Endothelial cell of umbilical vein (primary cell): ENCODE measurements at regions of chr19 and their contacts with region 1.

Region 1: GRCh38 chr19:1905071-1905862 is at the starts of genes ADAT3 and SCAMP4:
- DNase-seq: peak; percentile 99
- H3K4me3 ChIP-seq: peak within 1 kb of the TSS; percentile 55 to 63 (median 61)
- H3K27ac ChIP-seq: peak within 1 kb of the TSS; percentile 73
- H3K4me1 ChIP-seq: no peaks in the 10 kb centered on the region
- H3K27me3 ChIP-seq: no peaks in the 10 kb centered on the region
- CTCF ChIP-seq: no peak
- POLR2A ChIP-seq: peak; percentile 73
- total RNA-seq, gene ADAT3: 8.0 and 11.7 TPM in 2 replicates
- total RNA-seq, gene SCAMP4: 68.2 and 72.2 TPM in 2 replicates

Region 2: DNA sequence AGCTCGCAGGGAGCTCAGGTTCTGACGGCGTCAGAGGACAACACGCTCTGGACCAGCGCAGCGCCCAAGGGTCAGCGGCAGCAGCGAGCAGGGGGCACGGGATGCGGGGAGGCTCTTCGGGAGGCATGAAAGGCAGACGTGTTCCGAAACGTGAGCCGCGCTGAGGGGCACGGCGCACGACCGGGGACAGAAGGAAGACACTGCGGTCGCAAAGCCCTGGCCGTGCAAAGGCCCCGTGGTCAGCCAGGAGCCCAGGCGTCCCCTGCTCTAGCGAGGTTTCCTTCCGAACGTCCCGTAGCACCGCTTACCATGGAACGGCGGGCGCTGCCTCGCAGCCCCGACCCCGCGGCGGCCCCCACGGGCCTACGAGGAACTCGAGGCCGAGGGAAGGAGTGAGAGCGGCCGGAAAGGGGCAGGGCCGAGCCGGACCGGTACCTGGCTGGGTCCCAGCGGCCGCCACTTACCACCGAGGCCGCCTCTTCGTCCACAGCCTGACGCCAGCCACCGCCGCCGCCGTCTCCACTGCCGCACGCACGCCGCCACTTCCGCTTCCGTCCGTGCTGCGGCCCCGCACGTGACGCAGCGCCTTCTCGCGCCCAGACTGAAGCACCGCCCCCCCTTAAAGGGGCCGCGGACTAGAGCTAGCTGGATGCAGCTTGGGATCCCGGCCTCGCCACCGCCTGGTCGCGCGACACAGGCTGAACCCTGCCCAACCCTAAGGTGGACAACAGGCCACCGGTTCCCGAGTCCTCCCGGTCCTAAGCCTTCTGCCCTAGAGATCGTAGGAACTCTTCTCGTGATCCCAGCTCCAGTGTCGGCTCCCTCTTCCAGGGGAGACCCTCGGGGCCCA is 29.4 kb before region 1 on chr19:
- CTCF ChIA-PET with region 1: no interaction called
- POLR2A ChIA-PET with region 1: no interaction called
- dilution Hi-C with region 1: no loop called
- intact Hi-C with region 1: loop called (anchors 1 kb)
- DNase-seq: peak; percentile 91
- H3K4me3 ChIP-seq: peak overlapping the region; percentile 52 to 83 (median 72)
- H3K27ac ChIP-seq: peak overlapping the region; percentile 92
- H3K4me1 ChIP-seq: peaks cover 21% of the 10 kb centered on the region
- H3K27me3 ChIP-seq: no peaks in the 10 kb centered on the region
- CTCF ChIP-seq: no peak
- POLR2A ChIP-seq: peak; percentile 88

Region 3: DNA sequence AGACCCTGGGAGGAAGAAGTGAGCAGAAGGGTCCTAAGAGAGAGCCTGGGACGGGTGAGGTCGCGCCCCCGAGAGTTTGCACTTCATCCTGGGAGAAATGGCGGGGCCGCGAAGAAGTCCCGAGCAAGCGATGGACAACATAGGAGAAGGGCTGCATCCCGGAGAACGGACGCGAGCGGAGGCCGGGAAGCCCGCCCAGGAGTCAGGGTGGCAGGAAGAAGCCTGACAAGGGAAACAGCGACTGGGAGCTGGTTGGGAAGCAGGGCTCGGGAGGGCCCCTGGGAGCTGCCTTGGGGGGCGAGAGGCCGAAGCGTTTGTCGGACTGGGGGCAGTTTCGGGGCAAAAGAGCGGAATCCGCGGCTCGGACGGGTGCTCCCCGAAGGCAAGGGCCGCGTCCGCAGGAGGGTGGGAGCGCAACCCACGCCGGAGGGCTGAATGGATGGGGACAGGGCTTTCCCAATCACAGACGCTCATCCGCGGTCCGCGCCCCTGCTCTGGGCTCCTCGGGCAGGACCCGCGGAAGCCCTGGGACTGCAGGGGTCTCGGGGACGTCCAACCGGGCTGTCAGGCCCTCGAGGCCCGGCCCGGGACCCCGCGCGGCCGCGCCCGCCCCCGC is 20.4 kb before region 1 on chr19:
- CTCF ChIA-PET with region 1: no interaction called
- POLR2A ChIA-PET with region 1: no interaction called
- dilution Hi-C with region 1: no loop called
- intact Hi-C with region 1: loop called (anchors 1 kb)
- DNase-seq: no peak
- H3K4me3 ChIP-seq: peak overlapping the region; percentile 83 to 92 (median 88)
- H3K27ac ChIP-seq: peak overlapping the region; percentile 78
- H3K4me1 ChIP-seq: peaks cover 27% of the 10 kb centered on the region
- H3K27me3 ChIP-seq: no peaks in the 10 kb centered on the region
- CTCF ChIP-seq: no peak
- POLR2A ChIP-seq: peak; percentile 61

Region 4: GRCh38 chr19:2110822-2111221 is 205.6 kb after region 1 on chr19:
- CTCF ChIA-PET with region 1: no interaction called
- POLR2A ChIA-PET with region 1: no interaction called
- dilution Hi-C with region 1: no loop called
- intact Hi-C with region 1: no loop called
- DNase-seq: no peak
- H3K4me3 ChIP-seq: no peak overlapping the region
- H3K27ac ChIP-seq: no peak overlapping the region
- H3K4me1 ChIP-seq: no peaks in the 10 kb centered on the region
- H3K27me3 ChIP-seq: no peaks in the 10 kb centered on the region
- CTCF ChIP-seq: no peak
- POLR2A ChIP-seq: no peak

Region 5: GRCh38 chr19:2969104-2969504 is 1063.8 kb after region 1 on chr19:
- CTCF ChIA-PET with region 1: no interaction called
- POLR2A ChIA-PET with region 1: no interaction called
- dilution Hi-C with region 1: no loop called
- intact Hi-C with region 1: no loop called
- DNase-seq: peak; percentile 78
- H3K4me3 ChIP-seq: no peak overlapping the region
- H3K27ac ChIP-seq: peak overlapping the region; percentile 65
- H3K4me1 ChIP-seq: peaks cover 23% of the 10 kb centered on the region
- H3K27me3 ChIP-seq: no peaks in the 10 kb centered on the region
- CTCF ChIP-seq: no peak
- POLR2A ChIP-seq: no peak